Activated CD4-positive, alpha-beta T cell treated with anti-CD3 and anti-CD28 coated beads, Interleukin-2, amount 10 ng/mL, durations not matched to agents 24 days and 14 days (primary cell): ENCODE measurements at regions of chr22 and their contacts with region 1.

Region 1: GRCh38 chr22:45318168-45318557 is 8.4 kb downstream of the FAM118A start:
- DNase-seq: peak; percentile 96
- H3K4me3 Mint-ChIP-seq: peak overlapping the region; percentile 83
- H3K27ac Mint-ChIP-seq: peak overlapping the region; percentile 97
- H3K4me1 Mint-ChIP-seq: peaks cover 71% of the 10 kb centered on the region
- H3K27me3 Mint-ChIP-seq: no peaks in the 10 kb centered on the region

Region 2: GRCh38 chr22:45296628-45297297 is 21.4 kb before region 1 on chr22:
- intact Hi-C with region 1: no loop called
- DNase-seq: peak; percentile 83
- H3K4me3 Mint-ChIP-seq: peak overlapping the region; percentile 44
- H3K27ac Mint-ChIP-seq: peak overlapping the region; percentile 81
- H3K4me1 Mint-ChIP-seq: peaks cover 13% of the 10 kb centered on the region
- H3K27me3 Mint-ChIP-seq: no peaks in the 10 kb centered on the region

Region 3: DNA sequence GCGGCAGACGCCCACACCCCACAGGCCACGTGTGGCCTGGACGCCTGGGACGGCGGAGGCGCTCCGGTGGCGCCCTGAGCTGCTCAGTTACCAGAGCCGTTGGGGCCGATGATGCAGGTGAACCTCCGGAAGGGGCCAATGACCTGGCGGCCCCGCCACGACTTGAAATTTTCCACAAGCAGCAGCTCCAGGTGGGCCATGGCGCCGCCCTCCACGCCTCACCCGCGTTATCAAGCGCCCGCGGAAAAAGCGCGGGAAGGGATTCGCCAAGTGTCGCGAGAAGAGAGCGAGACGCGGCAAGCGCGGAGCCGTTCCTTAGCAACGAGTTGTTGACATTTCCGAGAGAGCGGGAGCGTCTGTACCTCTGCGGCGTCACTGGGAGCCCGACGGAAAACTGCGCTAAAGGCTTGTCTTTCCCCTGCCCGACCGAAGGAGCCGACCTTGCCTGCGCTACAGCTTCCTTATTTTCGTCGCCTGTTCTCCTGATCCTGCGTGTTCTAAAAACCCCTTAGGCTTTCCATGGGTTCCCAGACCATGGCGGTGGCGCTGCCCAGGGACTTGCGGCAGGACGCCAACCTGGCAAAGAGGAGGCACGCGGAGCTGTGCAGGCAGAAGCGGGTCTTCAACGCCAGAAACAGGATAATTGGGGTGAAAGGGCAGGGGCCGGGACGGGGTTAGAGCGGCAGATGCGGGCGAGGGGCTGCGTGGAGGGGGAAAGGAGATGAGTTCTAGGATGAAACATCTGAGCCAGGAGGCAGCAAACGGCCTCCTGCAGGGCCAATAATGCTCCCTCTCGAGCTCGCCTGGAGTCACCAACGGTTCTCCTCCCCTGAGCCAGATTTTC is 95.4 kb after region 1 on chr22 and contains the starts of genes RIBC2 and SMC1B:
- intact Hi-C with region 1: loop called (anchors 2 kb)
- DNase-seq: peak; percentile 97
- H3K4me3 Mint-ChIP-seq: peak within 1 kb of the TSS; percentile 93
- H3K27ac Mint-ChIP-seq: peak within 1 kb of the TSS; percentile 94
- H3K4me1 Mint-ChIP-seq: peaks cover 15% of the 10 kb centered on the region
- H3K27me3 Mint-ChIP-seq: no peaks in the 10 kb centered on the region
- total RNA-seq, gene RIBC2: 12.4 and 13.5 TPM in 2 replicates
- total RNA-seq, gene SMC1B: 0.56 and 0.59 TPM in 2 replicates